Dorsolateral prefrontal cortex (tissue), 120 donors: ENCODE measurements at regions of chr1 and their contacts with region 1.

Region 1: GRCh38 chr1:46539972-46540371 is 11.5 kb downstream of the KNCN start:
- DNase-seq: peak in 7 of 10 donors; percentile 53 to 83 (median 64)
- H3K4me3 ChIP-seq: no peak overlapping the region
- H3K27ac ChIP-seq: peak overlapping the region in 1 of 59 donors; percentile 35
- H3K27me3 ChIP-seq: peaks cover 0 to 20% (median 10%) of the 10 kb centered on the region in 45 donors
- CTCF ChIP-seq: no peak

Region 2: GRCh38 chr1:46244656-46245371 is 295.2 kb before region 1 on chr1:
- intact Hi-C with region 1: no loop called
- DNase-seq: no peak
- H3K4me3 ChIP-seq: no peak overlapping the region
- H3K27ac ChIP-seq: no peak overlapping the region
- H3K27me3 ChIP-seq: no peaks in the 10 kb centered on the region
- CTCF ChIP-seq: peak in 40 of 56 donors; percentile 10 to 53 (median 29)

Region 3: GRCh38 chr1:46605232-46605631 is 65.3 kb after region 1 on chr1:
- intact Hi-C with region 1: loop called in 1 of 2 experiments (anchors 5 kb)
- DNase-seq: no peak
- H3K4me3 ChIP-seq: peak overlapping the region in 2 of 59 donors; percentile 83 to 88
- H3K27ac ChIP-seq: peak overlapping the region in 4 of 59 donors; percentile 13 to 58 (median 41)
- H3K27me3 ChIP-seq: no peaks in the 10 kb centered on the region
- CTCF ChIP-seq: no peak